GM12878 (cell line): ENCODE measurements at regions of chr5 and their contacts with region 1.

Region 1: DNA sequence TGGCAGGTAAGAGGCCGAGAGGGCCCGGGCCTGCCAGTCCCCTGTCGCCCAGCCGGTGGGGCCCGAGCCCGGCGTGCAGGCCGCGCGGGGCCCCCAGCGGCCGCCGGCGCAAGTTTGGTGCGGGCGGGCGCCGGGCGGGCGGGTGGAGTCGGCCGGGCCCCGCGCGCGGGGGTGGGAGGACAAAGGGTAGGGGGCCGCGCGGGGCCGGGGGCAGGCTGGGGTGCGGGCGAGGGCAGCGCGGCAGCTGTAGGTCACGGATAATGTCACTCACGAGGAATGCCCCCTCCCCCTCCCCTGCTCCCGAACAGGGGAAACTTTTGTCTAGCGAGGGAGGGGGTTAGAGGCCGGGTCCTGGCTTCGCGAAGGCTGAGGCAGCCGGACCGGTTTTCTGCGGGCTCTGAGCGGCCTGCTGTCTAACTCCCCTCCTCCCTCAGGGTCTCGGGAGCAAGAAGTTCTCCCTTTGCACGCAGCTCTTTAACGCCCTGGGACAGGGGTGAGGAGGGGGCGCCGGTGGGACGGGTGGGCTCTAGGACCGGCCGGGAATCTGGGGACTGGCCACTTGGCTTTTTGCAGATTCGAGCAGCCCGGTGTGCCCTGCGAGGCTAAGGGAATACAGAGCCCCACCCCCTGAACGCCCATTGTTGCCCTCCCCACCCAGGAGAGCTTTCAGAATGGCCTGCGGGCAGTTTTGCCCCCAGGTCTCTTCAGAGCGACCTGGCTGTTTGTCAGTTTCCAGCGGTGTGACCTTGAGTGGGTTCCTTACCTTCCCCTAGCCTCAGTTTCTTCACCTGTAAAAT is 21.3 kb upstream of the NDST1 start:
- DNase-seq: no peak
- ATAC-seq: peak; percentile 35
- H3K4me3 ChIP-seq: peak overlapping the region; percentile 88
- H3K27ac ChIP-seq: peak overlapping the region; percentile 72
- H3K4me1 ChIP-seq: peaks cover 47% of the 10 kb centered on the region
- H3K27me3 ChIP-seq: no peaks in the 10 kb centered on the region
- CTCF ChIP-seq: no peak; a peak in 1 of 6 replicates
- EP300 ChIP-seq: no peak
- POLR2A ChIP-seq: no peak
- RAD21 ChIP-seq: no peak

Region 2: DNA sequence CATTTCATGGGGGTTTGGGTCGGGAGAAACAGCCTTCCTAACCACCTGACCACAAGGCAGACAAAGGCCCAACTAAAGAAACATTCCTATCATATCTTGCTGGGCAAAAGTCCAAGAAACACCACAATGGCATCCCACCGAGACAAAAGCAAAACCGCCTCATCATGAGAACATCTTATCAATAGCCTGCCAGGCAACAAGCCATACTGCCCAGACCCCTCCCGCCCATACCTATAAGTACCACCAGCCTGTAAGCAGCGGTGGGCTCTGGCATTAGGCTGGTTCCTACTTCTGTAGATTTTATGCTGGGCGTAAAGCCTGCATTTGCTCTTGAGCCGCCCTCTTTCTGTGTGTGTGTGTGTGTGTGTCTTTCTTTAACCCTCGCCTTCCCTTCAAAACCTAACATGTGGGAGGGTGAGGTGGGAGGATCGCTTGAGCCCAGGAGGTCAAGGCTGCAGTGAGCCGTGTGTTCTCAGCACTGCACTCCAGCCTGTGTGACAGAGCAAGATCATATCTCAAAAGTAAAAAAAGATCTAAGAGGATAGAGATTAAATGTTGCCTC is 598.9 kb before region 1 on chr5:
- CTCF ChIA-PET with region 1: no interaction called
- POLR2A ChIA-PET with region 1: no interaction called
- RAD21 ChIA-PET with region 1: no interaction called
- SMC1A ChIA-PET with region 1: no interaction called
- in situ Hi-C with region 1: no loop called
- intact Hi-C with region 1: no loop called
- DNase-seq: no peak
- ATAC-seq: no peak
- H3K4me3 ChIP-seq: no peak overlapping the region
- H3K27ac ChIP-seq: no peak overlapping the region
- H3K4me1 ChIP-seq: no peaks in the 10 kb centered on the region
- H3K27me3 ChIP-seq: no peaks in the 10 kb centered on the region
- CTCF ChIP-seq: no peak
- EP300 ChIP-seq: no peak
- POLR2A ChIP-seq: no peak
- RAD21 ChIP-seq: no peak

Region 3: DNA sequence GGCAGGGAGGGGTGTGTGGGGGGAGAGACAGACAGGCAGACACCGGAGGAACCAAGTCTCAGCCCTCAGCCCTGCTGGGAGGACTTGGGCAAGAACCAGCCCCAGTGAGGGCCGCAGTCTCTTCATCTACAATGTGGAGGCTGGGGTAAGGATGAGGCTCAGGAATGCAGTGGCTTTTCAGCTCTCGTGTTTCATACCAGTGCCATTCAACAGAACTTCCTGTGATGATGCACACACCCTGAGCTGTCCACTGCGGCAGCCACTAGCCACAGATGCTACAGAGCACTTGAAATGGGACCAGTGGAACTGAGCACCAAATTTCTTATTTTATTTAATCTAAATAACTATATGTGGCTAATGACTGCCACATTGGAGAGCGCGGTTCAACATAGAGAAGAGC is 207.7 kb before region 1 on chr5:
- CTCF ChIA-PET with region 1: no interaction called
- POLR2A ChIA-PET with region 1: no interaction called
- RAD21 ChIA-PET with region 1: no interaction called
- SMC1A ChIA-PET with region 1: no interaction called
- in situ Hi-C with region 1: no loop called
- intact Hi-C with region 1: no loop called
- DNase-seq: no peak
- ATAC-seq: no peak
- H3K4me3 ChIP-seq: no peak overlapping the region
- H3K27ac ChIP-seq: no peak overlapping the region
- H3K4me1 ChIP-seq: no peaks in the 10 kb centered on the region
- H3K27me3 ChIP-seq: peaks cover 12 to 13% of the 10 kb centered on the region in 2 experiments
- CTCF ChIP-seq: no peak
- EP300 ChIP-seq: no peak
- POLR2A ChIP-seq: no peak
- RAD21 ChIP-seq: no peak

Region 4: GRCh38 chr5:150498501-150498900 is 11.9 kb after region 1 on chr5:
- CTCF ChIA-PET with region 1: interaction called, 11 read pairs
- POLR2A ChIA-PET with region 1: interaction called, 7 read pairs
- RAD21 ChIA-PET with region 1: interaction called, 9 read pairs
- SMC1A ChIA-PET with region 1: interaction called, 15 read pairs
- in situ Hi-C with region 1: no loop called
- intact Hi-C with region 1: loop called (anchors 1 kb)
- DNase-seq: no peak
- ATAC-seq: no peak
- H3K4me3 ChIP-seq: no peak overlapping the region
- H3K27ac ChIP-seq: no peak overlapping the region
- H3K4me1 ChIP-seq: no peaks in the 10 kb centered on the region
- H3K27me3 ChIP-seq: no peaks in the 10 kb centered on the region
- CTCF ChIP-seq: no peak
- EP300 ChIP-seq: no peak
- POLR2A ChIP-seq: no peak
- RAD21 ChIP-seq: no peak

Region 5: GRCh38 chr5:150523472-150524350 is 37.1 kb after region 1 on chr5:
- CTCF ChIA-PET with region 1: interaction called, 10 read pairs
- POLR2A ChIA-PET with region 1: no interaction called
- RAD21 ChIA-PET with region 1: interaction called, 5 read pairs
- SMC1A ChIA-PET with region 1: interaction called, 13 read pairs
- in situ Hi-C with region 1: no loop called
- intact Hi-C with region 1: loop called (anchors 2 kb)
- DNase-seq: no peak
- ATAC-seq: peak; percentile 88
- H3K4me3 ChIP-seq: no peak overlapping the region
- H3K27ac ChIP-seq: no peak overlapping the region
- H3K4me1 ChIP-seq: no peaks in the 10 kb centered on the region
- H3K27me3 ChIP-seq: no peaks in the 10 kb centered on the region
- CTCF ChIP-seq: peak; percentile 56 to 62 (median 60)
- EP300 ChIP-seq: no peak
- POLR2A ChIP-seq: no peak
- RAD21 ChIP-seq: peak; percentile 61

Region 6: DNA sequence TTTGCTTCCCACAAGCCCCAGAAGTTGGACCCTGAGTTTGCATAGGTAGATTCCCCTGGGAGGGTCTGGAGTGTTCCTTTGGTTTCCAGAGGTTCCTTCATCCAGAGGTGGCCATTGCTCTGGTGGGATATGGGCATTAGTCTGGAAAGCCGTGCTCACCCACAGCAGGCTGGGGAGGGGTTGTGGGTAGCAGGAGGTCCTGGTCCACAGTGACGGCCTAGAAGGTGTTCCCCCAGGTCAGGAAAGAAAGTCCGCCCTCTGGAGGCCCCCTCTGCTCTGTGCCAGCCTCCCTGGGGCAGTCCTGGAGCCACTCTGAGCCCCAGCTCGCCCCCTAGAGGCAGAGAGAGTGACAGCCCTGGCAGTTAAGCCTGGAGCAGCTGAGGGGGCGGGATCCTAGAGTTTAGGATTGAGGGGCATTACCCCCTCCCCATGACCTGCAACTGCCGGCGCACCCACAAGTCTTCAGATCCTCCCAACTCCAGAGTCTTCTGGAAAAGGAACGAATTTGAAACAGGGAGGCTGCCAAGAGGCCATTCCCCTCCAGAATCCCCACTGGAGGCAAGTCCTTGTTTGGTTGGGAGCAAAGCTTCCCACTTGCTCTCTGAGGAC is 58.1 kb after region 1 on chr5:
- CTCF ChIA-PET with region 1: interaction called, 46 read pairs
- POLR2A ChIA-PET with region 1: no interaction called
- RAD21 ChIA-PET with region 1: interaction called, 9 read pairs
- SMC1A ChIA-PET with region 1: interaction called, 7 read pairs
- in situ Hi-C with region 1: no loop called
- intact Hi-C with region 1: loop called (anchors 2 kb)
- DNase-seq: peak; percentile 17
- ATAC-seq: peak; percentile 100
- H3K4me3 ChIP-seq: no peak overlapping the region
- H3K27ac ChIP-seq: no peak overlapping the region
- H3K4me1 ChIP-seq: no peaks in the 10 kb centered on the region
- H3K27me3 ChIP-seq: no peaks in the 10 kb centered on the region
- CTCF ChIP-seq: peak; percentile 96 to 99 (median 99); a peak in 5 of 6 replicates
- EP300 ChIP-seq: no peak
- POLR2A ChIP-seq: no peak
- RAD21 ChIP-seq: peak; percentile 87

Region 7: DNA sequence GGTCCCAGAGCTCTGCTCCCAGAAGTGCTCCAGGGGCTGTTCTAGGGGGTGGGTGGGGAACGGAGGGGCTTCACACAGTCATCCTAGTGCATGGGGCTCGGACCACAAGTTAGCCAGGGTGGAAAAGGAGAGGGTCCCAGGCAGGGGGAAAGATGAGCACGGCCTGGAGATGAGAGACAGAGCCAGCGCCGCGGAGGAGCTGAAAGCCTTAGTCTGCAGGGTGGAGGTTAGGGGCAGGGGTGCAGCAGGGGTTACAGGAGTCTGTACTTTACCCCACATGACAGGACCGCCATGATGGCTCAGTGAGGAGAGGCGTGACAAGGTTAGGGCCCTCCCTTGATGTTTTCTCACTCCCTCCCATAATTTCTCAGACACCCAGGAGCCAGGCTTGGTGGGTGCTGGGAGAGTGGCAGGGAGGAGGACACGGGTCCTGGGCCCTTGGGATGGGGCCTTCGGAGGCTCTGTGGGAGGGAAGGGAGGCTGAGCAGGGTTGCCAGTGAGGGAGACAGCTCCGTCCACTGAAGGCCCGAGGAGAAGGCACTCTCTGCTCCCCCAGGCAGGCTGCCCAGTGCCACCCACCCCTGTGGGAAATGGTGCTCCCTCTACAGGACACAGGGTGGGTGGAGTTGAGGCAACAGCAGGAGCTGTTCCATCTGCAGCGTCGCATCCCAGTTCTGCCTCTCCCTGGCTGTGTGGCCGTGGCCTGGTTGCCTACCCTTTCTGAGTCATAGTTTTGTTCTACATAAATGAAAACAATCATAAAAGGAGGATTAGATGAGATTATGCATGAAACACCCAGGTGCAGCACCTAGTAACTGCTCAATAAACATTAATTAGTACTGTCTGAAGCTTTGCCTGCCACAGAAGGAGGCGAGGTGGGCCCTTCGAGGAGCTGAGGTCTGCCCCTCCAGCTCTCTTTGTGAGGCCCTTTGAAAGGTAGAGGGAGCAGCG is 87.5 kb after region 1 on chr5:
- CTCF ChIA-PET with region 1: no interaction called
- POLR2A ChIA-PET with region 1: no interaction called
- RAD21 ChIA-PET with region 1: no interaction called
- SMC1A ChIA-PET with region 1: no interaction called
- in situ Hi-C with region 1: no loop called
- intact Hi-C with region 1: no loop called
- DNase-seq: no peak
- ATAC-seq: peak; percentile 54
- H3K4me3 ChIP-seq: no peak overlapping the region
- H3K27ac ChIP-seq: no peak overlapping the region
- H3K4me1 ChIP-seq: no peaks in the 10 kb centered on the region
- H3K27me3 ChIP-seq: no peaks in the 10 kb centered on the region
- CTCF ChIP-seq: peak in 2 of 3 experiments; percentile 9 to 24; a peak in 1 of 6 replicates
- EP300 ChIP-seq: no peak
- POLR2A ChIP-seq: no peak
- RAD21 ChIP-seq: no peak

Region 8: GRCh38 chr5:150751096-150751891 is 264.7 kb after region 1 on chr5:
- CTCF ChIA-PET with region 1: no interaction called
- POLR2A ChIA-PET with region 1: interaction called, 10 read pairs
- RAD21 ChIA-PET with region 1: no interaction called
- SMC1A ChIA-PET with region 1: no interaction called
- in situ Hi-C with region 1: no loop called
- intact Hi-C with region 1: no loop called
- DNase-seq: no peak
- ATAC-seq: peak; percentile 78
- H3K4me3 ChIP-seq: peak overlapping the region; percentile 17
- H3K27ac ChIP-seq: peak overlapping the region; percentile 22; the same call in 1 of the 2 replicates
- H3K4me1 ChIP-seq: no peaks in the 10 kb centered on the region; the same call in 1 of the 2 replicates
- H3K27me3 ChIP-seq: no peaks in the 10 kb centered on the region
- CTCF ChIP-seq: no peak
- EP300 ChIP-seq: no peak
- POLR2A ChIP-seq: no peak
- RAD21 ChIP-seq: no peak